Common myeloid progenitor, CD34-positive (primary cell): ENCODE measurements at regions of chr1 and their contacts with region 1.

Region 1: DNA sequence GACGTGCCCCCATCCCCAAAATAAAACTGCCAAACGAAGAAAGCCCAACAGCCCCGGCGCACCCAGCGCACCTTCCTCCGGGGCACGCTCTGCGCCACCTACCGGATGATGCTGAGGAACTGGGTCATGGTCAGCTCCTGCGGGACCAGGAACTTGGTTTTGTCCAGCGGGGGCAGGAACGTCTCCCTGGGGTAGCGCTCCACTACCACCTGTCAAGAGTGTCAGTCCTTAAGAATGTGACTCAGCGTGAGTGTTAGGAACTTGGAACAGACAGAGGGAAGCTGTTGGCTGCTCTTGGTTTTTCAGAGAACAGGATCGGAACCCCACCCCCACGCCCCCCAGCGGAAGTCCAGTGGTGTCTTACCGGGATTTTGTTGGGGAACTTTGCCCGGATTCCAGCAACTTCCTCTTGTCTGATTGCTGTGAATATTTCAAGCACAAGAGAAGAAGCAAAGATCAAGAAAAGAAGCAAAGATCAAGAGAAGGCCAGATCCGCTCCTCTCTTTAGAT is 431 bp downstream of the MAP1LC3C start:
- DNase-seq: peak; percentile 45 to 54 (median 52)
- H3K4me3 ChIP-seq: peak overlapping the region in 6 of 7 experiments; percentile 8 to 75 (median 57)
- H3K27ac ChIP-seq: no peak overlapping the region
- H3K4me1 ChIP-seq: peaks cover 0 to 6% (median 4%) of the 10 kb centered on the region in 4 experiments
- H3K27me3 ChIP-seq: no peaks in the 10 kb centered on the region

Region 2: DNA sequence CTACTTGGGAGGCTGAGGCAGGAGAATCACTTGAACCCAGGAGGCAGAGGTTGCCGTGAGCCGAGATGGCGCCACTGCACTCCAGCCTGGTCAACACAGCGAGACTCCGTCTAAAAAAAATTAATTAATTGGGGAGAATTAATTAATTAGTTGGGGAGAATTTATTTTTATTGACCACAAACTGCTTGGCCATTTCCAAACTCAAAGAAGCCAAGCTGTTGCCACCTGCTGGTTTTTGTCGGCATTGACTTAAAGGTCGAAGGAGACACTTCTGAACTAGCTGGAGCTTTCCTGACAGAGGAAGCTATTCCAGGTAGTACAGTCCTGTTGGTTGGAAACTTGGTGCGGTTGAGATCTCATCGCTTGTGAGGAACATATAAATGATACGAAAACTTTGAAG is 12.7 kb before region 1 on chr1:
- CTCF ChIA-PET with region 1: interaction called, 16 read pairs
- POLR2A ChIA-PET with region 1: no interaction called
- DNase-seq: peak; percentile 12 to 32 (median 22)
- H3K4me3 ChIP-seq: no peak overlapping the region
- H3K27ac ChIP-seq: no peak overlapping the region
- H3K4me1 ChIP-seq: no peaks in the 10 kb centered on the region
- H3K27me3 ChIP-seq: no peaks in the 10 kb centered on the region